A673 (cell line): ENCODE measurements at regions of chr11 and their contacts with region 1.

Region 1: DNA sequence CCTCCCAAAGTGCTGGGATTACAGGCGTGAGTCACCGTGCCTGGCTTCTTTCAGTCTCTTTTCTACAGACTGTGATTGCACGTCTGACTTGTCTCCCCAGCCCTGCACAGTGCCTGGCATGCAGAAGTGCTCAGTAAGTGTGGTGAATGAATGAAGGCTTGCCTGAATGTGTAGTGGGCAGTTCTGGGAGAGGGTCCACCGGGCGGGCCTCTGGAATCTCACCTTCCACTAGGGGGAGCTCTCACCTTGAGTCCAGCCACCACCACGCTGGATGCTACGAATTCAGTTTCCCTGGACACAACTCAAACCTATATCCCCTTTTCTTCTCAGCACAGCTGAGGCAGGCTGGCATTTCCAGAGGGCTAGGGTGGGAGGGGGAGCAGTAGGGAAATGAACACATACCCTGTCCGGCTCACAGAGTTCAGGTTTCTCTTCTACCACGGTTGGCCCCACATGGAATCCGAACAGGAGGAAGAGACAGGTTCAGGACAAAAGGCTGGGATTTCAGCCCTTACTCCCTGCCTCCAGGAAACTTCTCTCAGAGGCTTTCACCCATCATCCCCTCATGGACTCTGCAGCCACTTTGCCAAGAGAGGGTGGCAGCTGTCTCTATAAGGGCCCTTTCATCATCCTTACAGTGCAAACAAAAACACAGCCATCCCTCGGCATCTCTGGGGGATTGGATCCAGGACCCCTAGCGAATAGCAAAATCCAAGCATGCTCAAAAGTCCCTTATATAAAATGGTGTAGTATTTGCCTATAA is 86.8 kb downstream of the NECTIN1 start:
- DNase-seq: peak; percentile 42
- H3K4me3 ChIP-seq: no peak overlapping the region
- H3K27ac ChIP-seq: no peak overlapping the region
- H3K4me1 ChIP-seq: no peaks in the 10 kb centered on the region
- H3K27me3 ChIP-seq: no peaks in the 10 kb centered on the region
- CTCF ChIP-seq: peak; percentile 72

Region 2: GRCh38 chr11:119594639-119595249 is 47.4 kb before region 1 on chr11:
- CTCF ChIA-PET with region 1: no interaction called
- POLR2A ChIA-PET with region 1: no interaction called
- intact Hi-C with region 1: no loop called
- DNase-seq: no peak
- H3K4me3 ChIP-seq: no peak overlapping the region
- H3K27ac ChIP-seq: no peak overlapping the region
- H3K4me1 ChIP-seq: peaks cover 4% of the 10 kb centered on the region
- H3K27me3 ChIP-seq: no peaks in the 10 kb centered on the region
- CTCF ChIP-seq: no peak

Region 3: GRCh38 chr11:119907122-119907851 is 265.1 kb after region 1 on chr11:
- CTCF ChIA-PET with region 1: no interaction called
- POLR2A ChIA-PET with region 1: no interaction called
- intact Hi-C with region 1: no loop called
- DNase-seq: no peak
- H3K4me3 ChIP-seq: no peak overlapping the region
- H3K27ac ChIP-seq: no peak overlapping the region
- H3K4me1 ChIP-seq: peaks cover 4% of the 10 kb centered on the region
- H3K27me3 ChIP-seq: peaks cover 7% of the 10 kb centered on the region
- CTCF ChIP-seq: no peak

Region 4: DNA sequence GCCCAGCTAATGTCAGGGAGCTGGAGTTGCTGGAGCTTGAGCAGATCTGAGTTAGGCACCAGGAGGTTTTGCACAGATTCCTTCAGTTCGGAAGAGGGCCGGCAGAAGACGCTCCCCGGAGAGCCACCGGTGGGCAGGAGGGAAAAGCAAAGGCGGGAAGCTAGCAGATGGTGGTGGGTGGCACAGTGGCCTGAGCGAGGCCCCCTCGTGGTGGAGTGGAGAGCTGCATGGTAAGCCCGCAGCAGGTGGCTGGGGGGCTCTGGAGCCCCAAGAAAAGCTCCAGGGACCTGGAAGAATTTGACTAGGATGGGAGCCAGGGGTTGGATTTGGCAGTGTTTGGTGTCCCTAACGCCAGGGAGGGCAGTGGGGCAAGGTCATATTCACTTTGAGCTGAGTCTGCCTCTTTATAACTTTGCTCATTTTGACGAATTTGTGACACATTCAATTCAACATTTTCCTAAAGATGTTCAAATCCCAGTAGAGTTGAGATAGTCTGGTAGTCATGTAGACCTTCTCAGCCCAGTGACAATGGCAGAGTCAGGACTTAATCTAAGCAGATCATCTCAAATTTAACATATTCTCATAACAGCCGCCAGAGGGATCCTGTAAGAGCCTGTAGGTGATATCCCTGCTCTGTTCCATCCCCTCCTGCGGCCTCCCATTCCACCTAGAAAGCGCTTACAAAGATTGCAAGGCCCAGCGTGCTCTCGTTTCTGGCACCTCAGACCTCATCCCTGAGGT is 437.8 kb after region 1 on chr11:
- CTCF ChIA-PET with region 1: interaction called, 11 read pairs
- POLR2A ChIA-PET with region 1: no interaction called
- intact Hi-C with region 1: no loop called
- DNase-seq: no peak
- H3K4me3 ChIP-seq: no peak overlapping the region
- H3K27ac ChIP-seq: no peak overlapping the region
- H3K4me1 ChIP-seq: no peaks in the 10 kb centered on the region
- H3K27me3 ChIP-seq: peaks cover 4% of the 10 kb centered on the region
- CTCF ChIP-seq: 0 out of 2 replicates have a peak, but pooled peaks have one; percentile 34

Region 5: DNA sequence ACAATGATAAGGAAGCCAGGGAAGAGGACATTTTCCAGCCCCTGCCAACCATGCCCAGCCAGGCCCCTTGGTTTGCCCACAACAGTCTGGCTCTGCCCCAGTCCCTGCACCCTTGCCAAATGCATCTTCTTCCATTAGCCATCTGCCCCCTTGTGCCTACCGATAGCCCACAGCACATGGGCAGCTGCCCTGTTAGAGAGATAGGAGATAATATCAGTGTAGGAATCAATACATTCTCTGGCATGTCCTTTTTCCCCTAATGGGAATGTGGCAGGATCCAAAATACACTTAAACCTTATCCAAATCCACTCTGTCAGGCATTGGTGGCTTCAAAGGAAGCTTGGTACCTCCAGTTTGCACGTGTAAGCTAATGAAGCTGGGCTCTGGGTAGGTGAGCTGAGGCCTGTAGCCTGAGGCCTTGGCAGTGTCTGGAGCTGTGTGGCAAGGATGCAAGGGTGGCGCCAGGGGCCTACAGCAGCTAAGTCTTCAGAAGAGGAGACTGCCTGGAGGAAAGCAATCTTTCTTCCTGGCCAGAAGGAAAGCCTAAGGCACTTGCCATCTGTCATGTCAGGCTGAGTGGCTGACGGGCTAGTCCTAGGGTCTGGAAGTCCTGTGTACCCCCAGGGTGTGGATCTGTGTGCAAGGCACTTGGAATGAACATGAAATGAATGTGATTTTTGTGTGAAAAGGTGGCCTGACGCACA is 1217.5 kb after region 1 on chr11:
- CTCF ChIA-PET with region 1: no interaction called
- POLR2A ChIA-PET with region 1: interaction called, 11 read pairs
- intact Hi-C with region 1: no loop called
- DNase-seq: no peak
- H3K4me3 ChIP-seq: no peak overlapping the region
- H3K27ac ChIP-seq: no peak overlapping the region
- H3K4me1 ChIP-seq: no peaks in the 10 kb centered on the region
- H3K27me3 ChIP-seq: peaks cover 5% of the 10 kb centered on the region
- CTCF ChIP-seq: no peak